ENCODE measurements at regions of chr1 and their contacts with region 1.

Region 1: GRCh38 chr1:20633190-20634064 is at the start of gene PINK1:
- DNase-seq: peak; percentile 90
- CTCF ChIP-seq: peak; percentile 99

Region 2: DNA sequence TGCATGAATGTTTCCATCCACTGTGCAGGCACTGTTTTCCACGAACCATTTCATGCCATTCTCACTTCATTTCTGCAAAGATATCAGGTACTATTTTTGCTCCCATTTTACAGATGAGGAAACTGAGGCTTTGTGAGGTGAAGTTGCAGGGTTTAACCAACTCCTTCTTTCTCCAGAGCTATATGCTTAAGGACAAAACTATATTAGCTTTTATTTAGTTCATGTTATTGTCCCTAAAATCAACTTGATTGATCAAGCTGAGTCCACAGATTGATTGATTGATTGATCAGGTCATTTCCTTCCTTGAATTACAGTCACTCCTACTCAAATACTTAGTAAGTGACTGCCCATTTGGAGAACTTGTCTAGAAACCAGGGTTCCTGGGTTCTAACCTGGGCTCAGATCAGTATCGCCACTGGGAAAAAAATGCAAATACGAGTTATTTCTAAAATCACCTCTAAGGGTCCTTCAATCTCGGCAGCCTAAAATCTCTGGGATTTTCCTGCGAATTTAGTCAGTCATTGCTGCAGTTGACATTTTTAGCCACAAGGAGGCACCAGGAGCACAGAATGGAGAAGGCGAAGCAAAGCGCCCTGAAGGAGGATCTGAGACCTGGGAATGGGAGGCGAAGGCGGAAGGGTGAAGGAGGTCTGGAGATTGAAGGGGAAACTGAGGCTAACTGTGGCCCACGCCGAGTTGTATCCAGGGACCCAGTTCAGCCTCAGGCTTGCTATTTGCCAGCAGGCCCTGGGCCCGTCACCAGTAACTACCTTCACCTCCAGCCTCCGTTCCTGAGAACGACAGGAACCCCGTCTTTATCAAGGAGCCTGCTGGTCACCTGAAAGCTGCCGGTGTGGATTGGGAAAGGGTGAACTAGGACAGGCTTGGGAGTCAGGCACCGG is 111.2 kb before region 1 on chr1:
- CTCF ChIA-PET with region 1: interaction called, 70 read pairs
- POLR2A ChIA-PET with region 1: no interaction called
- DNase-seq: peak; percentile 65
- CTCF ChIP-seq: peak; percentile 95

Region 3: GRCh38 chr1:20574686-20575540 is 58.5 kb before region 1 on chr1:
- CTCF ChIA-PET with region 1: interaction called, 18 read pairs
- POLR2A ChIA-PET with region 1: no interaction called
- DNase-seq: peak; percentile 82
- CTCF ChIP-seq: peak; percentile 59

Region 4: DNA sequence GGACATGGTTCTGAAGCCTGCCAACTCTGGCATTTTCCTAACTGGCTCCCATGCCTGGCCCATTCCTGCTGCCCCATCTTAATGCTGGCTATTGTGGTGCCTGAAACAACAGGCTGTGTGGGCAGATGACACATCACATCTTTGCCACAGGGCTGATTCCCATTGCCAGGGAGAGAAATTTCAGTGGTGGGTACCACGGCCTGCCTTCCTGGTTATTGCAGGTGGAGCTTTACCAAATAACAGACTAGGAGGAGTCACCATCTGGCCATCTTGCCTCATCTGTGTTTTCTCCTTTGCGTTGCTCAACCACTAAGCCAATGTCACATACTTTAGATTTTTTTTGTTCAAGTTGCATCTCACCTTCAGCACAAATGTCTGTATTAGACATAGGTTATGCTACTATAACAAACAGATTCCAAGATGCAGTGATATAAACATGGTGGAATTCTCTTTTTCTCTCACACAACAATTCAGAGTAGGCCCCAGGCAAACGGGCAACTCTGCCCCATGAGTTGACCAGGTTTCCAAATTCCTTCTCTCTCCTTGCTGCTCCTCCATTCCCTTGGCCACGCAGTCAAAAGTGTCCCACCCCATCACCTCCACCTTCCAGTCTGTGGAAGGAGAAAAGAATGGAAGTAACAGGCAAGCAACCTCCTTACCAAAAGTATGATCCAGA is 30.4 kb before region 1 on chr1:
- CTCF ChIA-PET with region 1: no interaction called
- POLR2A ChIA-PET with region 1: no interaction called
- DNase-seq: no peak
- CTCF ChIP-seq: no peak

Region 5: DNA sequence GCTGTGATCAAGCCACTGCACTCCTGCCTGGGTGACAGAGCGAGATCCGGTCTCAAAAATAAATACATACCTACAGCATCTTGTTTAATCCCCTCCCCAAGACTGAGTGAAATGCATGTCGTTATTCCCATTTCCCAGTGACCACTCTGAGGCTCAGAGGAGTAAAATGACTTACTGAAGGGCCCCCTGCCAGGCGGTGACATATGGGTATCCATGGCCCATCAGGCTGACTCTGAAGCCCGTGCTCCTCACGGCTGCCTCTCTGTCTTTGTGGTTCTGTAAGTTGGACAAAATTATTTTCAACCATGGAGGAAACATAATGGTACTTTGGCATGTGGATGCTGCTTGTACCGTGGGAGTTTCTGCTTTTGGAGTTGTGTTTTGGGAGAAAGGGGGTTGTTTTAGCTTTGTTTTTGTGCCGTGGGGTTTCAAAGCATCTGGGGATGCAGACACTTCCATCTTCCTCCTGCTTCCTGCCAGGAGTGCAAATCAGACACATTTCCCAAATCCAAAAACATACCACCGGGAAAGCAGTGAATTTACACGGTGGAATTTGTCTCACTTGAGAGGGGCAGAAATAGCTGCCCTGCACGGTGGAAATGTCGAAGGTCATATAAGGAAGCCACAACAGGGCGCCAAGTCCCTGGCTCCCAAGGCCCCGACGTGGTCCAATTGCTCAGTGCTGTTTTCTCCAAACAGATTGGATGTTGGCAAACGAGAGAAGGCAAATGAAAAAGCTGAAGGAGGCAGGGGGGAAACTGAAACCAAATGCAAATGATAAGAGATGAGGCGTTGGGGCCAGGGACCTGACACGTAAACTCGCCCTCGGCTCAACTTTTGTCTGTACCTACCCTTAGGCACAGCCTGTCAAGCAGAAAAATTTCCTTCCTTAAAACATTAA is 17.2 kb before region 1 on chr1:
- CTCF ChIA-PET with region 1: interaction called, 32 read pairs
- POLR2A ChIA-PET with region 1: no interaction called
- DNase-seq: peak; percentile 61
- CTCF ChIP-seq: no peak

Region 6: DNA sequence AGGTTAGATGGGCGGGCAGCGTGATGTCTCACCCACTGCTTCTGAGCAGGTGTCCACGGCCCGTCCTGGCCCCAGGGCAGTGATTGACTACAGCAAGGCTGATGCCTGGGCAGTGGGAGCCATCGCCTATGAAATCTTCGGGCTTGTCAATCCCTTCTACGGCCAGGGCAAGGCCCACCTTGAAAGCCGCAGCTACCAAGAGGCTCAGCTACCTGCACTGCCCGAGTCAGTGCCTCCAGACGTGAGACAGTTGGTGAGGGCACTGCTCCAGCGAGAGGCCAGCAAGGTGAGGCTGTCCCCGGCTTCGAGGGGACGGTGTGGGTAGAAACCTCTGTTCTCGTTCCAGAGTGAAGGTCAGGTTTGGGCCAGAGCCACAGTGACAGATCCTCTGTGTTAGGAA is 15.5 kb after region 1 on chr1:
- CTCF ChIA-PET with region 1: interaction called, 30 read pairs
- POLR2A ChIA-PET with region 1: interaction called, 11 read pairs
- DNase-seq: no peak
- CTCF ChIP-seq: no peak

Region 7: GRCh38 chr1:20661207-20662109 is 28.0 kb after region 1 on chr1 and contains the start of gene DDOST:
- CTCF ChIA-PET with region 1: interaction called, 20 read pairs
- POLR2A ChIA-PET with region 1: no interaction called
- DNase-seq: peak; percentile 99
- CTCF ChIP-seq: no peak

Region 8: GRCh38 chr1:20830378-20830777 is 197.0 kb after region 1 on chr1:
- CTCF ChIA-PET with region 1: no interaction called
- POLR2A ChIA-PET with region 1: no interaction called
- DNase-seq: no peak
- CTCF ChIP-seq: no peak

Region 9: DNA sequence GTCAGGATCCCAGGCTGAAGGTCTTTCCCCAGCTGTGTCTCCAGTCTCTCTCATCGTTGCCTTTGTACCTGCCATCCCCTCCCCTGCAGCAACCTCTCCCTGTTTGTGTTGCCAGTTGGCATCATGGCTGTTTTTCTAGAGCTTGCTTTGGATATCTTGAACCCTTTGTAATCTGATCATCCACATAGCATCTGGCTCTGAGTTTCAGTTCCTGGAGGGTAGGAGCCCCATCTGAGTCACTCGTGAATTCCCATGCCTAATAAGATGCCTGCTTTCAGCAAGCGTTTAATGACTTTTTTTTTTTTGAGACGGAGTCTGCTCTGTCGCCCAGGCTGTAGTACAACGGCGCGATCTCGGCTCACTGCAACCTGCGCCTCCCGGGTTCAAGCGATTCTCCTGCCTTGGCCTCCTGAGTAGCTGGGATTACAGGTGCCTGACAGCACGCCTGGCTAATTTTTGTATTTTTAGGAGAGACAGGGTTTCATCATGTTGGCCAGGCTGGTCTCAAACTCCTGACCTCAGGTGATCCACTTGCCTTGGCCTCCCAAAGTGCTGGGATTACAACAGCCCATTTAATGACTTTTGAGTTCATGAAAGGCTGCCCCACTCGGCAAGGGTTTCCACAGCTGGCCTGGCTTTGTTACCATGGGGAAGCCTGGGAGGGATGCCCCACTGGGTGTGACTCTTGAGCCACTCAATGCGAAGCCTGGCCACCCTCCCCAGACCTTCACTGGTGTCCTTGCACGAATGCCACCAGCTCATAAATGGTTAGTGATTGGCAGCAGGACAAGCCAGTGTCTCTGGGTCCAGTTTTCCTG is 887.7 kb after region 1 on chr1:
- CTCF ChIA-PET with region 1: no interaction called
- POLR2A ChIA-PET with region 1: no interaction called
- DNase-seq: no peak
- CTCF ChIP-seq: no peak

Measured in GM10248 (cell line).